Naive thymus-derived CD4-positive, alpha-beta T cell (primary cell): ENCODE measurements at regions of chr19 and their contacts with region 1.

Region 1: DNA sequence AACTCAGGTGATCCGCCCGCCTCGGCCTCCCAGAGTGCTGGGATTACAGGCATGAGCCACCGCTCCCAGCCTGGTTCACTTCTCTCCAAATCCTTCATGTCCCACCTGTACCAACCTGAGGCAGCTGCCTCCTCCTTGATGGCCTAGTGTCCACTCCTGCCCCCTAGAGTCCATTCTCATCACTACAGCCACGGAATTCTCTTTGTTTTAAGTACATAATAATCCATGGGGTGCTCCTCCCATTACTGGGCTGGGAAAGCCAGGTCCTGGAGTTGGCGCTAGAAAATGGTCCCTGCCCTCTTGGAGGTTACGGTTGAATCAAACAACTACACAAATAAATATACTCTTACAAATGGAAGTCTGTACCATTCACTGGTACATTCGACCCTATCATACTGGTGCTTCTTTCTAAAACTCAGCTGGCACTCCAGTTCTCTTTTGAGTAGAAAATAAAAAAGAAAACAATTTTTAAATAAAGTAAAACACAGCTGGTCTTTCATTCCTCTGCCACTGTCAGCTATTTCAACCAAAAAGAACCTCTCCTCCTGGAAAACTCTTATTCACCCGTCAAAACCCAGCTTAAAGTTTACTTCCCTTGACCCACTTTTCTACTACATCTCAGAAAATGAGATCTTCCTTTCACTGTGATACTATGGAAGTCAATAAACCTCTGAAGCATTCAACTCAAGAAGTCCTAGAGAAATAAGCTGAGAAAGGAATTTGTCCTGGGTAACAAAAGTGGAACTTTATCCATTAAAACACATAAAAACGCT is 22.4 kb upstream of the ARHGEF18 start:
- DNase-seq: peak in 3 of 9 donors; percentile 7 to 40 (median 33)
- ATAC-seq: no peak
- H3K4me3 ChIP-seq: no peak overlapping the region
- H3K4me3 Mint-ChIP-seq: no peak overlapping the region
- H3K27ac ChIP-seq: no peak overlapping the region
- H3K27ac Mint-ChIP-seq: no peak overlapping the region
- H3K4me1 ChIP-seq: no peaks in the 10 kb centered on the region
- H3K4me1 Mint-ChIP-seq: no peaks in the 10 kb centered on the region
- H3K27me3 ChIP-seq: no peaks in the 10 kb centered on the region
- H3K27me3 Mint-ChIP-seq: no peaks in the 10 kb centered on the region

Region 2: GRCh38 chr19:7224209-7224686 is 102.0 kb before region 1 on chr19:
- CTCF ChIA-PET with region 1: no interaction called
- POLR2A ChIA-PET with region 1: no interaction called
- intact Hi-C with region 1: no loop called
- DNase-seq: no peak
- ATAC-seq: no peak
- H3K4me3 ChIP-seq: no peak overlapping the region
- H3K4me3 Mint-ChIP-seq: no peak overlapping the region
- H3K27ac ChIP-seq: no peak overlapping the region
- H3K27ac Mint-ChIP-seq: no peak overlapping the region
- H3K4me1 ChIP-seq: no peaks in the 10 kb centered on the region
- H3K4me1 Mint-ChIP-seq: peaks cover 0 to 10% (median 8%) of the 10 kb centered on the region in 7 donors
- H3K27me3 ChIP-seq: no peaks in the 10 kb centered on the region
- H3K27me3 Mint-ChIP-seq: peaks cover 0 to 6% (median 0%) of the 10 kb centered on the region in 5 donors

Region 3: DNA sequence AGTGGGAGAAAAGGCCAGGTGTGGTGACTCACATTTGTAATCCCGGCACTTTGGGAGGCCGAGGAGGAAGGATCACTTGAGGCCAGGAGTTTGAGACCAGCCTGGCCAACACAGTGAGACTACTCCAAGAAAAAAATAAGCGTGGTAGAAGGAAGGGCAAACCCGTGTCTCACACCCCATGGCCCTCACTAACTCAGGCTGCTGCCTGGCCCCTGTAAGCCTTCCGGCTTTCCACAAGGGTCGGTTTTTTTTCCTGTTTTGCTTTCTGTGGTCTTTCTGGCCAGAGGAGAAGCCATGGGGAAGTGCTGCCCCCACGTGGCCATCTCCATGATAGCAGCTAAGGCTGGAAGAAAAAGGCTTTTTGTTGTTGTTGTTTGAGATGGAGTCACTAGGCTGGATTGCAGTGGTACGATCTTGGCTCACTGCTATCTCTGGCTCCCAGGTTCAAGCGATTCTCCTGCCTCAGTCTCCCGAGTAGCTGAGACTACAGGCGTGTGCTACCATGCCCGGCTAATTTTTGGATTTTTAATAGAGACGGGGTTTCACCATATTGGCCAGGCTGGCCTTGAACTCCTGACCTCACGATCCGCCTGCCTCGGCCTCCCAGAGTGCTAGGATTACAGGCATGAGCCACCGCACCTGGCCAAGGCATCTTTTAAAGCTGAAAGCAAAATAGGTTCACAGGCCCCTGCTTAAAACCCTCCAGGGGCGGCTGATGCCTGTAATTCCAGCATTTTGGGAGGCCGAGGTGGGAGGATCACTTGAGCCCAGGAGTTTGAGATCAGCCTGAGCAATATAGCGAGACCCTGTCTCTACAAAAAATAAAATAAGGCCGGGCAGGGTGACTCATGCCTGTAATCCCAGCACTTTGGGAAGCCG is 14.9 kb after region 1 on chr19:
- CTCF ChIA-PET with region 1: interaction called, 5 read pairs
- POLR2A ChIA-PET with region 1: interaction called, 5 read pairs
- intact Hi-C with region 1: loop called in 1 of 2 experiments (anchors 1 kb)
- DNase-seq: peak; percentile 65 to 91 (median 77)
- ATAC-seq: peak; percentile 60
- H3K4me3 ChIP-seq: no peak overlapping the region
- H3K4me3 Mint-ChIP-seq: peak overlapping the region in 7 of 10 donors; percentile 11 to 74 (median 39)
- H3K27ac ChIP-seq: no peak overlapping the region
- H3K27ac Mint-ChIP-seq: peak overlapping the region; percentile 14 to 95 (median 86)
- H3K4me1 ChIP-seq: peaks cover 37 to 39% of the 10 kb centered on the region in 2 donors
- H3K4me1 Mint-ChIP-seq: peaks cover 29 to 64% (median 59%) of the 10 kb centered on the region in 7 donors
- H3K27me3 ChIP-seq: no peaks in the 10 kb centered on the region
- H3K27me3 Mint-ChIP-seq: peaks cover 0 to 12% (median 0%) of the 10 kb centered on the region in 5 donors

Region 4: DNA sequence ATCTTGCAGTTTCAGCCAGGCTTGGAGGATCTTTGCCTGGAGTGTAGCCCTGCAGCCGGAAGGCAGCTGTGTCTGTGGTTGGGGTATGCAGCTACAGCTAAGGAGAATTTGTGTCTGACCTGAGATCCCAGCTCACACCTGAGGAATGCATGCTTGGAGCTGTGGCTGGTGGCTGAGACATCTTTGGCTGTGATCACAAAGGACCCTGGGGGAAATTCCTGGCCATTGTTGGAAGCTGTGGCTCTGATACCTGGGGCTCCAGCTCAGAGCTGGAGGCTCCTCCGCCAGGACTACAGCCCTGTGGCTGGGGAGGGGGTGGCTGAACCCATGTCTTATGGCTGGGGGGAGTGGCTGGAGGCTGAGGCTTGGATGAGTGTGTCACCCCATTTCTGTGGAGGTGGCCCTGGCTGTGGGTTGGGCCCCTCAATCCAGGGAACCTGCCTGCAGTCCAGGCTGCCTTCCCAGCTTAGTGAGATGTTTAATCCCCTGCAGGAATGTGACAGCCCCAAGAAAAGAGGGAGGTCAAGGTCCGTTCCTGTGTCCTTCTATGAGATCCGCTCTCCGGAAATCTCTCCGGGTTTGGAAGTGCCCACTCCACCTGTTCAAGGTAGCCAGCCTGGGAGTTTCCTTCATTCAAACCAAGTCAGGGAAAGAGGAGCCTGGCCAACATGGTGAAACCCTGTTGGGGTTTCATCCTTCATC is 50.0 kb after region 1 on chr19:
- CTCF ChIA-PET with region 1: interaction called, 3 read pairs
- POLR2A ChIA-PET with region 1: no interaction called
- intact Hi-C with region 1: loop called in 1 of 2 experiments (anchors 1 kb)
- DNase-seq: no peak
- ATAC-seq: no peak
- H3K4me3 ChIP-seq: no peak overlapping the region
- H3K4me3 Mint-ChIP-seq: no peak overlapping the region
- H3K27ac ChIP-seq: no peak overlapping the region
- H3K27ac Mint-ChIP-seq: peak overlapping the region in 3 of 9 donors; percentile 55 to 76 (median 69)
- H3K4me1 ChIP-seq: no peaks in the 10 kb centered on the region
- H3K4me1 Mint-ChIP-seq: peaks cover 0 to 33% (median 16%) of the 10 kb centered on the region in 7 donors
- H3K27me3 ChIP-seq: no peaks in the 10 kb centered on the region
- H3K27me3 Mint-ChIP-seq: no peaks in the 10 kb centered on the region